ENCODE measurements at regions of chr4 and their contacts with region 1.

Region 1: GRCh38 chr4:182938205-182938645 is 21.0 kb upstream of the DCTD start:
- ATAC-seq: peak in 4 of 8 experiments; percentile 35 to 100 (median 97)
- H3K4me3 ChIP-seq: no peak overlapping the region
- H3K27ac ChIP-seq: no peak overlapping the region
- H3K4me1 ChIP-seq: no peaks in the 10 kb centered on the region

Region 2: GRCh38 chr4:183106839-183107238 is 168.6 kb after region 1 on chr4:
- in situ Hi-C with region 1: no loop called
- ATAC-seq: no peak
- H3K4me3 ChIP-seq: no peak overlapping the region
- H3K27ac ChIP-seq: no peak overlapping the region
- H3K4me1 ChIP-seq: no peaks in the 10 kb centered on the region

Region 3: GRCh38 chr4:183129675-183130074 is 191.4 kb after region 1 on chr4:
- in situ Hi-C with region 1: no loop called
- ATAC-seq: no peak
- H3K4me3 ChIP-seq: no peak overlapping the region
- H3K27ac ChIP-seq: no peak overlapping the region
- H3K4me1 ChIP-seq: no peaks in the 10 kb centered on the region

Region 4: DNA sequence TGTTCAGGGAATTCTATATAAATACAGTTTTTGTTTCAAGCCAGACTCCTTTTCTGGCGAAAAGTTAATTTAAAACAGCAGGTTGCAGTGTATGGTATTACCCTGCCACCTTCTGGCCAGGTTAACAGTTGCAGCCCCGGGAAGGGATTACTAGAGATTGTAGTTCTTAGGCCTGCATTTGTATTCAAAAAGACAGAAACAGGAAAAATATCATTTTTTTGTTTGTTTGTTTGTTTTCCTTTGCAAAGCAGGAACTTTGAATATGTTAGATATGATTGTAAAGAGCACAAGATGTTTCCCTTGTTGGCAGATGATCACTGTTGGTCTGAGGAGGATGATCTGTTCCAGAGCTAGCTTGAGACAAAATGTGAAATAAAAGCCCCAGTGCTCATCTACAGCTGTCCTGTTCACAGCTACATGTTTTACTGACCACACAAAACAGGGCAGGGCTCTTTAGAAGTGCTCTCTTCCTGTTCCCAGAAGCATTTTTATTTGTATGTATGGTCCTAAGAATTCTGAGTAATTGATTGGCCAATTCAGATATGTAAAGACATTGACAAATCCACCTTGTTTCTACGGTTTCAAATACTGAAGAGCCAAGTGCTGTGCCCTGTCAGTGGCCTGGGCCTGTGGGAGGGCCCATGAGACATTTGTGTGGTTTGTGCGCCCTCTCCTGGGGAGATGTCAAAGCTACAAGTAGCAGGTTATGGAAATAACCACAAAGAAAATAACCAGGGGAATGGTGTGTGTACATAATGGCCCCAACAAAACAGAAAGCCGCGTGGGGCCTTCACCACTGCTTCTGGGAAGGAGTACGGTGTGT is 323.9 kb after region 1 on chr4:
- in situ Hi-C with region 1: loop called in 4 of 9 experiments (anchors 10 to 25 kb)
- ATAC-seq: peak; percentile 85 to 96 (median 89)
- H3K4me3 ChIP-seq: no peak overlapping the region
- H3K27ac ChIP-seq: no peak overlapping the region
- H3K4me1 ChIP-seq: peaks cover 9 to 19% of the 10 kb centered on the region in 2 donors

Region 5: GRCh38 chr4:183321079-183321478 is 382.9 kb after region 1 on chr4:
- in situ Hi-C with region 1: no loop called
- ATAC-seq: no peak
- H3K4me3 ChIP-seq: no peak overlapping the region
- H3K27ac ChIP-seq: no peak overlapping the region
- H3K4me1 ChIP-seq: no peaks in the 10 kb centered on the region

Region 6: GRCh38 chr4:183407128-183407585 is 468.9 kb after region 1 on chr4:
- in situ Hi-C with region 1: loop called in 1 of 9 experiments (anchors 25 kb)
- ATAC-seq: peak; percentile 78 to 97 (median 92)
- H3K4me3 ChIP-seq: peak overlapping the region; percentile 28 to 59 (median 38)
- H3K27ac ChIP-seq: peak overlapping the region; percentile 61 to 88
- H3K4me1 ChIP-seq: peaks cover 10 to 31% of the 10 kb centered on the region in 2 donors

Measured in motor neuron (in vitro differentiated cells).